Activated T-helper 2 cell treated with anti-CD3 and anti-CD28 coated beads, Interferon-gamma antibody, Interleukin-2, Interleukin-4, amounts not matched to agents 10 μg/mL and 5 μg/mL and 100 μg/mL, durations not matched to agents 14 hours and 24 hours and 36 hours (primary cell): ENCODE measurements at regions of chr3 and their contacts with region 1.

Region 1: DNA sequence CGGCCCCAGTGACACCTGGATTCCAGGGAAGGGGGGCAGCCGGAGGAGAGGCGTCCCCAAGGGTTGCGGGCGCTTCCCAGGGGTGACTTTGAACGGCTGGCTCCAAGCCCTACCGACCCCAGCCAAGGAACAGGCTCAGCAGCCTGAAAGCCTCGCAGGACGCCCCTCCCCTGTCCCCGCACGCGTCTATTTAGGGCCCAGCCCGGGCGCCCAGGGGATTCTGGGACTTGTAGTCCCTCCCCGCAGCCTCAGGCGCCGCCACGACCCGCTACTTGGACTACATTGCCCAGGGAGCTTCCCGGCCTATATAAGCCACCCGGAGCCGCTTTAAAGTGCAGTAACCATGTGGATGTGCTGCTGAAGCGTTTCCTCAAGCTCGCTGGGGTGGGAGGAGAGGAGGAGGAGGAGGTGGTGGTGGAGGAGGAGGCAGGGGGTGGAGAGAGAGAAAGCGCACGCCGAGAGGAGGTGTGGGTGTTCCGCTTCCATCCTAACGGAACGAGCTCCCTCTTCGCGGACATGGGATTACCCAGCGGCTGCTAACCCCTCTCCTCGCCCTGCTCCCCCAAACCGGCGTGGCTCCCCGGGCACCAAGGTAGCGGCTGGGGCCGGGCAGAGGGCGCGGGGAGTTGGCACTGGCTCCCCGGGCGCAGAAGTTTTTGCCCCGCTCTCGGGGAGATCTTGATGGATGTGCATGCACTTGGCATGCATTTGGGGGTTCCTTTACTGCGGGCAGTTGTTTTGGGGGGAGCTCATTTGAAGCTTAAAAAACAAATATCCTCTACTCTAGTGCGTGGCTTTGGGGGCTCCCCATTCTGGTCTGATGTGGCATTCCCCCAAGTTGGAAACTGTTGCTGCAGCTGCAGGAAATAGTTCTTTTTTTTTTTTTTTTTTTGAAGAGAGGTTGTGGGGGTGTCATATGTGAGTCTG is at the start of gene ITPR1:
- DNase-seq: peak; percentile 98
- H3K4me3 Mint-ChIP-seq: peak within 1 kb of the TSS; percentile 96
- H3K27ac Mint-ChIP-seq: peak within 1 kb of the TSS; percentile 87
- H3K4me1 Mint-ChIP-seq: peaks cover 44% of the 10 kb centered on the region
- H3K27me3 Mint-ChIP-seq: peaks cover 28% of the 10 kb centered on the region
- total RNA-seq, gene ITPR1: 117 and 137 TPM in 2 replicates

Region 2: GRCh38 chr3:4358273-4358672 is 135.0 kb before region 1 on chr3:
- intact Hi-C with region 1: no loop called
- DNase-seq: no peak
- H3K4me3 Mint-ChIP-seq: no peak overlapping the region
- H3K27ac Mint-ChIP-seq: no peak overlapping the region
- H3K4me1 Mint-ChIP-seq: peaks cover 9% of the 10 kb centered on the region
- H3K27me3 Mint-ChIP-seq: no peaks in the 10 kb centered on the region

Region 3: GRCh38 chr3:4387210-4388204 is 105.8 kb before region 1 on chr3:
- intact Hi-C with region 1: loop called (anchors 1 kb)
- DNase-seq: no peak
- H3K4me3 Mint-ChIP-seq: no peak overlapping the region
- H3K27ac Mint-ChIP-seq: peak overlapping the region; percentile 87
- H3K4me1 Mint-ChIP-seq: peaks cover 45% of the 10 kb centered on the region
- H3K27me3 Mint-ChIP-seq: no peaks in the 10 kb centered on the region

Region 4: DNA sequence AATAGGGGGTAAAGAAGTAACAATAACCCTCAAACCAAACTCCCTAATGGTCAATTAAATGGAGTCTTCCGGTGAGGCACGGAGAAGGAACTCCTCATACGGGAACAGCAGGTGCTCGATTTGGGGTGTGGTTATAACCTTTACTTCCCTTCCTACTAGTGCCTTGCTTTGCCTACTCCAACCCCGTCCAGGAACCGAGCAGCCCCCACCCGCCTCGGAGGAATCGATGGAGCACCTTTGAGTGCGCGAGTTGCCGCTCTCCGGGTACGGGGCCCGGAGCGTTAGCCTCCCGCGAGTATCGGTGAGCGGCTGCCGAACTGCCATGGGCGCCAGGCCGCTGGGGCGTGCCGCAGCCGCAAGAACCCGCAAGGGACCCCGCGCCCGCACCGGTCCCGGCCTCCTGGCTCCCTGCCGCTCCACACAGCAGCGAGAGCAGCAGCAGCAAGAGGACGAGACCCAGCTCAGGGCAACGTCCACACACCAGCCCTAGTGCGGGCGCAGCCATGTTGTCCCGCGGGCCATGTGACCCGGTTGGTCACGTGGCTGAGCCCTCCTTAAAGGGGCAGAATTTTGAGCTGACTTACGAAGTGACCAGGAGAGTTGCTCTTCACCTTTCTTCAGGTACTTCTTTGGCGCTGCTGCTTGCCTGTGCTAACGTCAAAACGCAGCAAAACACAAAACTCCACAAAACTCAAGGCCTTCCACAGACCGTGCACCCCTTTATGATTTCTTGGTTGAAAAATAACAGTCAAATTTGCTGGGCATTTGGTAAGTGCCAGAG is 26.3 kb before region 1 on chr3 and contains the start of gene SUMF1:
- intact Hi-C with region 1: loop called (anchors 1 kb)
- DNase-seq: peak; percentile 67
- H3K4me3 Mint-ChIP-seq: peak within 1 kb of the TSS; percentile 95
- H3K27ac Mint-ChIP-seq: peak within 1 kb of the TSS; percentile 91
- H3K4me1 Mint-ChIP-seq: peaks cover 16% of the 10 kb centered on the region
- H3K27me3 Mint-ChIP-seq: peaks cover 3% of the 10 kb centered on the region
- total RNA-seq, gene SUMF1: 6.9 and 7.7 TPM in 2 replicates

Region 5: GRCh38 chr3:4517643-4518311 is 24.5 kb after region 1 on chr3:
- intact Hi-C with region 1: loop called (anchors 2 kb)
- DNase-seq: no peak
- H3K4me3 Mint-ChIP-seq: no peak overlapping the region
- H3K27ac Mint-ChIP-seq: peak overlapping the region; percentile 56
- H3K4me1 Mint-ChIP-seq: peaks cover 34% of the 10 kb centered on the region
- H3K27me3 Mint-ChIP-seq: no peaks in the 10 kb centered on the region

Region 6: GRCh38 chr3:4845882-4846281 is 352.6 kb after region 1 on chr3:
- intact Hi-C with region 1: loop called (anchors 10 kb)
- DNase-seq: no peak
- H3K4me3 Mint-ChIP-seq: no peak overlapping the region
- H3K27ac Mint-ChIP-seq: peak overlapping the region; percentile 82
- H3K4me1 Mint-ChIP-seq: peaks cover 90% of the 10 kb centered on the region
- H3K27me3 Mint-ChIP-seq: no peaks in the 10 kb centered on the region